ENCODE measurements at regions of chr1 and their contacts with region 1.

Region 1: DNA sequence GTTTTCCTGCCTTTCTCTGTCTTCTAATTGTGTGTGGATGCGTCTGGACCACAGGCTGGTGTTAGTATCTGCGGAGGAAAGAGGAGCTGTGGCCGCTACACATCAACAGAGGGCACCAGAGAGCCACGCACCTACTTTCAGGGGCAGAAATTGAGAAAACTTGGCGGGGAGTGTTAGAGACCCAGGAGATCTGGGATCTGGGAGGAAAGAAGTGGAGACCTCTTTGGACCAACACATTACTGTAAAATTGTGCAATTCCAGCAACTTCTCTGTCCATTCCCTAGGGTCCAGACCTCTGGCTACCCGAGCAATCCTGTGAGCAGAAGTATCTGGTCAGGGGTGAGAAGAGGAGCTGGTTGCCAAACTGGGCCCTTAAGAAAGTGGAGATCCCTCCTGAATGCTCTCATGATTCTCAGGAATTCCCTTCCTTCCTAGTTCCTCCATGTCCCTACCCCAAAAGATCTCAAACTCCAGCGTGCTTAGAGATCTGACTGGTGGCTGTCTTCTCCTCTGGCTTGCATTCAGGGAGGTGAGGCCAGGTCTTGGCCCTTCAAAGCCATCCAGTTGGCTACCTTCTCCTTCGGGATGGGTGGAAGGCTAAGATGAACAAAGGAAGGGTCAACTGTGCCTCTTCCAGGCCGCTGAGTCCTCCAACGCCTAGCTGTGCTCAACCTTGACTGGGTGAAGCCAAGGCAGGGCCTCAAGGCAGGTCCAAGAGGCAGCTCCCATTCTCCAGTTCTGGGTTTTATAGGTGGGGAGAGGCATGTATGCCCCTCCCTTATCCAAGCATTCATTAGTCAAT is 1.2 kb upstream of the KIRREL1 start:
- DNase-seq: peak; percentile 62
- H3K4me3 Mint-ChIP-seq: no peak overlapping the region
- H3K27ac Mint-ChIP-seq: no peak overlapping the region
- H3K4me1 Mint-ChIP-seq: peaks cover 4% of the 10 kb centered on the region
- H3K27me3 Mint-ChIP-seq: peaks cover 72% of the 10 kb centered on the region

Region 2: GRCh38 chr1:157916887-157917570 is 75.2 kb before region 1 on chr1:
- CTCF ChIA-PET with region 1: no interaction called
- DNase-seq: no peak
- H3K4me3 Mint-ChIP-seq: no peak overlapping the region
- H3K27ac Mint-ChIP-seq: no peak overlapping the region
- H3K4me1 Mint-ChIP-seq: no peaks in the 10 kb centered on the region
- H3K27me3 Mint-ChIP-seq: peaks cover 5% of the 10 kb centered on the region

Region 3: DNA sequence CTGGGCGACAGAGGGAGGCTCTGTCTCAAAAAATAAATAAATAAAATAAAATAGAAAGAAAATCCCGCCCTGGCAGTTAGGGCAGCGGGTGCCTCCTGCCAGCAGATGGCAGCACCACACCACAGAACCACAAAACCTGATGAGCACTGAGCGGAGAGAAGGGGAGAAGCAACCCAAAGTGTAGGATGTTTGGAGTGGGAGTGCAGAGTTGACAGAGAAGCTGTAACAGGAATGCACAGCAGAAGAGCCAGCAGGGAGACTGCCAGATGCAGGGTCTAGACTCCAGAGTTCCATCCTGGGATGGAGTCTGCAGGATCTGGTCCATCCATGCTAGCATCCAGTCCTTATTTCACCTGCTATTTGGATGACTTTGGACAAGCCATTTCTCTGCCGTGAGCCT is 28.5 kb before region 1 on chr1:
- CTCF ChIA-PET with region 1: interaction called, 12 read pairs
- DNase-seq: peak; percentile 63
- H3K4me3 Mint-ChIP-seq: no peak overlapping the region
- H3K27ac Mint-ChIP-seq: no peak overlapping the region
- H3K4me1 Mint-ChIP-seq: no peaks in the 10 kb centered on the region
- H3K27me3 Mint-ChIP-seq: peaks cover 19% of the 10 kb centered on the region

Region 4: GRCh38 chr1:158005224-158005623 is 13.0 kb after region 1 on chr1:
- CTCF ChIA-PET with region 1: interaction called, 12 read pairs
- DNase-seq: no peak
- H3K4me3 Mint-ChIP-seq: no peak overlapping the region
- H3K27ac Mint-ChIP-seq: no peak overlapping the region
- H3K4me1 Mint-ChIP-seq: no peaks in the 10 kb centered on the region
- H3K27me3 Mint-ChIP-seq: peaks cover 22% of the 10 kb centered on the region

Region 5: DNA sequence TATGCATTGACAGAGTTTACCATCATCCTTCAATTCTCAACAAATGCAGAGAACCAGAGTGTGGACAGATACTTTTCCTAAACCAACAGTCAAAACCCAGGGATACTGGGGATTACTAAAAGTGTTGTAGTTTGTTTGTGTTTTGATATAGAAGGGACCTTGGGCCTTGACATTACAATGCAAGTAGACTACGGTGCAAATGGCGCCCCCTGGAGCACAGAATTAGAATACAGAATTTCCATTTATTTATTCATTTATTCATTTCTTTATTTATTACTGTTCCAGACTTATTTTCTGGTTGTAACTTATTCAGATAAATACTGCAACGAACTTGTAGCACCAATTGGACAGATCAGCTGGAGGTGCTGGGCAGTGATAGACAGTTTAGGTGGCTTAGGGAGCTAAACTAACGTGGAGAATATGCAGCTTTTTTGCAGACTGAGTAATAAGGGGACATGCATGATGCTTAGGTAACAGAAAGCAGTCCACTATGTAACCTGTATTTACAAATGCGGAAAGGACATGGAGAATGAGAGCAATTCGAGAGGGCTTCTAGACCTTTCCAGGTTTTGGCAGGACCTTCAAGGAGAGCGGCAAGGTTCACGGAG is 43.8 kb after region 1 on chr1:
- CTCF ChIA-PET with region 1: interaction called, 34 read pairs
- DNase-seq: peak; percentile 34
- H3K4me3 Mint-ChIP-seq: no peak overlapping the region
- H3K27ac Mint-ChIP-seq: no peak overlapping the region
- H3K4me1 Mint-ChIP-seq: no peaks in the 10 kb centered on the region
- H3K27me3 Mint-ChIP-seq: peaks cover 12% of the 10 kb centered on the region